ENCODE measurements at regions of chr9 and their contacts with region 1.

Region 1: GRCh38 chr9:133184962-133185361 is 21.2 kb upstream of the GBGT1 start:
- DNase-seq: peak; percentile 38 to 65 (median 50)
- ATAC-seq: peak; percentile 77
- H3K4me3 ChIP-seq: no peak overlapping the region
- H3K27ac ChIP-seq: no peak overlapping the region
- H3K4me1 ChIP-seq: no peaks in the 10 kb centered on the region
- H3K27me3 ChIP-seq: no peaks in the 10 kb centered on the region
- CTCF ChIP-seq: peak in 6 of 7 experiments; percentile 43 to 67 (median 60)
- POLR2A ChIP-seq: no peak

Region 2: DNA sequence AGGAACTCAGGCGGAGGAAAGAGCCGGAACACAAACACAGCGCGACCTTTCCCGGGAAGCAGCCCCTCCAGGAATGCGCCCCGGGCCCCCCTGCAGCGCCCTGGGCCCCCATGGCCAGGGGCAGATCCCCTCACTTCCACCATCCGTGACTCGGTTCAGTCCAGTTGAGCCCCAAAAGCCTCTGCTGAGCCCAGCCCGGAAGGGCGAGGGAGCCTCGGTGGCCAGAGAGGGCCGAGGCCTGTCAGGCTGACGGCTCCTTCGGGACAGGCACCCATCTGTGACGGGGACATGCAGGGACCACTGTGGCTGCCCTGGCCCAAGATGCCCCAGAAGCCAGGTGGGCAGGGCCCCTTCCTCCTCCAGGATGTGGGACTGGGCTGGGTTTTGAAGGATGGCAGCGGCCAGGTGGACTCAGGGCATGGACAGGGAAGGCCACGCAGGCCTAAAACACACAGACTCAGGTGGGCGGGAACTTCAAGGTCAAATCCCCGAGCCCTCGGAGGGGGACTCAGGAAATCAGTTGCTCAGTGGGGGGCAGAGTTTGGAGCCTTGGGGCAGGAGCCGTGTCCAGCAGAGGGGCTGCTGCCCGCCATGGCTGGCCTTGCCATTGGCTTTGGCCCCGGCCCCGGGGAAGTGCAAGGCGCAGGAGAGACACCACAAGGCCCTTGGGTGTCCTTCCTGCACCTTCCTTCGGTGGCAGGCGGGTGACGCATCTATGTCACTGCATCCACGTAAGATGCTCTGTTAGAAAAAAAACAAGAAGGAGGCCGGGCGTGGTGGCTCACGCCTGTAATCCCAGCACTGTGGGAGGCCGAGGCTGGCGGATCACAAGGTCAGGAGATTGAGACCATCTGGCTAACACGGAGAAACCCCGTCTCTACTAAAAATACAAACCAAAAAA is 119.8 kb after region 1 on chr9:
- intact Hi-C with region 1: no loop called
- DNase-seq: no peak
- ATAC-seq: no peak
- H3K4me3 ChIP-seq: no peak overlapping the region
- H3K27ac ChIP-seq: no peak overlapping the region
- H3K4me1 ChIP-seq: no peaks in the 10 kb centered on the region
- H3K27me3 ChIP-seq: no peaks in the 10 kb centered on the region
- CTCF ChIP-seq: no peak
- POLR2A ChIP-seq: no peak

Region 3: GRCh38 chr9:133320421-133320881 is 135.5 kb after region 1 on chr9:
- intact Hi-C with region 1: loop called (anchors 10 kb)
- DNase-seq: no peak
- ATAC-seq: no peak
- H3K4me3 ChIP-seq: no peak overlapping the region
- H3K27ac ChIP-seq: no peak overlapping the region
- H3K4me1 ChIP-seq: no peaks in the 10 kb centered on the region
- H3K27me3 ChIP-seq: no peaks in the 10 kb centered on the region
- CTCF ChIP-seq: no peak
- POLR2A ChIP-seq: no peak